PC-3 (cell line): ENCODE measurements at regions of chr14 and their contacts with region 1.

Region 1: GRCh38 chr14:20697273-20698017 is 8.9 kb downstream of the ANG start:
- DNase-seq: peak; percentile 95
- ATAC-seq: peak; percentile 98
- H3K4me3 ChIP-seq: no peak overlapping the region
- H3K27ac ChIP-seq: no peak overlapping the region
- H3K4me1 ChIP-seq: peaks cover 7% of the 10 kb centered on the region
- H3K27me3 ChIP-seq: no peaks in the 10 kb centered on the region
- CTCF ChIP-seq: peak; percentile 92

Region 2: DNA sequence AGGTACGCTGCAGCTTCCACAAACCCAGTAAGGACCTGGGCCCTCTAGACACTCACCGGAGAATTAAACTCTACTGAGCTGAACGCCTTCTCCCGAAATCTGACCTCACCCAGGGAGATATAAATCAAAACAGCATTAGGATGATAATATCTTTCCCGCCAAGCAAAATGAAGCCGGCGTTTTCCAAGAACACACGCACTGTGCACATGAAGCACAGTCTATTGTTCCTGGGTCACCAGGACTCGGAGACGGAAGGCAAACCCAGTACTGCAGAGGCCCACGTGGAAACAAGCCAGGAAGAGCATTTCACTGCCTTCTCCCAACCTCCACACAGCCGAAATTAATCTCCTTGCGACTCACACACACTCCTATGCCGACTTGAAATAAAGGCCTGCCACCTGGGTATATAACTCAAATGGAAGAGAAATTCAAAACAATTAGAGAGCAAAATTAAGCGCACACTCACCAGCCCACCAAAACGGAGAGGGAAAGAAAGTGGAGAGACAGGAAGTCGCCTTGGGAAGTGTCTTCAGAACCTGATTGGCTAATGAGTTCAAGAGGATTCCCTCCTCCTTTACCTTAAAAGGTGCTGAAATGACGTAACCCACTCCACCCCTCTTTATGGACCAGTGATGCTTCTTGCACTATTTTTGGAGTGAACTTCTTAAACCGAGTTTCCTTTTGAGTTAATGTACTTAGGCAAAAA is 364.5 kb before region 1 on chr14 and contains the start of gene CCNB1IP1:
- CTCF ChIA-PET with region 1: no interaction called
- POLR2A ChIA-PET with region 1: no interaction called
- intact Hi-C with region 1: no loop called
- DNase-seq: peak; percentile 94
- ATAC-seq: peak; percentile 97
- H3K4me3 ChIP-seq: peak within 1 kb of the TSS; percentile 83
- H3K27ac ChIP-seq: peak within 1 kb of the TSS; percentile 26
- H3K4me1 ChIP-seq: peaks cover 10% of the 10 kb centered on the region
- H3K27me3 ChIP-seq: no peaks in the 10 kb centered on the region
- CTCF ChIP-seq: no peak
- total RNA-seq, gene CCNB1IP1: 32.8 and 35.0 TPM in 2 replicates

Region 3: GRCh38 chr14:20683125-20683890 is 14.1 kb before region 1 on chr14:
- CTCF ChIA-PET with region 1: no interaction called
- POLR2A ChIA-PET with region 1: no interaction called
- intact Hi-C with region 1: no loop called
- DNase-seq: peak; percentile 95
- ATAC-seq: peak; percentile 37
- H3K4me3 ChIP-seq: peak overlapping the region; percentile 85
- H3K27ac ChIP-seq: peak overlapping the region; percentile 80
- H3K4me1 ChIP-seq: peaks cover 25% of the 10 kb centered on the region
- H3K27me3 ChIP-seq: no peaks in the 10 kb centered on the region
- CTCF ChIP-seq: no peak

Region 4: DNA sequence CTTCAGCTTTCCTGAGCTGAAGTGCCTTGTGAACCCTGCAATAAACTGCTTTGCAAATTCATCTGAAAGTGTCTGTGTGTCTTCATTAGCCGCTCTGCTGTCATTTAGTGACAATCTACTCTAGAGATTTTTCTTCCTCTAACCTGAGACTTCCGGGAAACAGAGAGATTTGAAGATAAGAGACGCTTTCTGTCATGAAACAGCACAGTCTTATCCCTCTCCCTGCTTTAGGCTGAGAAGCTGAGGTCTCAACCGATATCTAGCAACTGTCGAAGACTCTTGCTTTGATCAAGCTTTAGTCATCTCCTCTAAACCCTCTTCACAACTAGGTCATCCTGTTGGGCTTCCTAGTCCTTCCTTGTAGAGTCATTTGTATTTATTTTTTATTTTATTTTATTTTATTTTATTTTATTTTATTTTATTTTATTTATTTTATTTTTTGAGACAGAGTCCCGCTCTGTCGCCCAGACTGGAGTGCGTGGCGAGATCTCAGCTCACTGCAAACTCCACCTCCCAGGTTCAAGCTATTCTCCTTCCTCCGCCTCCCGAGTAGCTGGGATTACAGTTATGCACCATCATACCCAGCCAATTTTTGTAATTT is 259.0 kb after region 1 on chr14:
- CTCF ChIA-PET with region 1: no interaction called
- POLR2A ChIA-PET with region 1: no interaction called
- intact Hi-C with region 1: no loop called
- DNase-seq: no peak
- ATAC-seq: no peak
- H3K4me3 ChIP-seq: no peak overlapping the region
- H3K27ac ChIP-seq: no peak overlapping the region
- H3K4me1 ChIP-seq: no peaks in the 10 kb centered on the region
- H3K27me3 ChIP-seq: peaks cover 59% of the 10 kb centered on the region
- CTCF ChIP-seq: no peak

Region 5: GRCh38 chr14:20970983-20971704 is 273.7 kb after region 1 on chr14:
- CTCF ChIA-PET with region 1: no interaction called
- POLR2A ChIA-PET with region 1: no interaction called
- intact Hi-C with region 1: loop called (anchors 2 kb)
- DNase-seq: peak; percentile 89
- ATAC-seq: peak; percentile 87
- H3K4me3 ChIP-seq: peak overlapping the region; percentile 77
- H3K27ac ChIP-seq: no peak overlapping the region
- H3K4me1 ChIP-seq: peaks cover 9% of the 10 kb centered on the region
- H3K27me3 ChIP-seq: peaks cover 22% of the 10 kb centered on the region; the same call in 1 of the 2 replicates
- CTCF ChIP-seq: peak; percentile 89

Region 6: GRCh38 chr14:21039585-21040369 is 342.3 kb after region 1 on chr14:
- CTCF ChIA-PET with region 1: no interaction called
- POLR2A ChIA-PET with region 1: no interaction called
- intact Hi-C with region 1: loop called (anchors 5 kb)
- DNase-seq: peak; percentile 62
- ATAC-seq: peak; percentile 83
- H3K4me3 ChIP-seq: no peak overlapping the region
- H3K27ac ChIP-seq: no peak overlapping the region
- H3K4me1 ChIP-seq: no peaks in the 10 kb centered on the region
- H3K27me3 ChIP-seq: peaks cover 39% of the 10 kb centered on the region
- CTCF ChIP-seq: peak; percentile 67

Region 7: GRCh38 chr14:21145437-21145836 is 448.0 kb after region 1 on chr14:
- CTCF ChIA-PET with region 1: no interaction called
- POLR2A ChIA-PET with region 1: no interaction called
- intact Hi-C with region 1: no loop called
- DNase-seq: no peak
- ATAC-seq: no peak
- H3K4me3 ChIP-seq: no peak overlapping the region
- H3K27ac ChIP-seq: no peak overlapping the region
- H3K4me1 ChIP-seq: no peaks in the 10 kb centered on the region
- H3K27me3 ChIP-seq: peaks cover 21% of the 10 kb centered on the region; the same call in 1 of the 2 replicates
- CTCF ChIP-seq: no peak